HEK293T (cell line): ENCODE measurements at regions of chr19 and their contacts with region 1.

Region 1: DNA sequence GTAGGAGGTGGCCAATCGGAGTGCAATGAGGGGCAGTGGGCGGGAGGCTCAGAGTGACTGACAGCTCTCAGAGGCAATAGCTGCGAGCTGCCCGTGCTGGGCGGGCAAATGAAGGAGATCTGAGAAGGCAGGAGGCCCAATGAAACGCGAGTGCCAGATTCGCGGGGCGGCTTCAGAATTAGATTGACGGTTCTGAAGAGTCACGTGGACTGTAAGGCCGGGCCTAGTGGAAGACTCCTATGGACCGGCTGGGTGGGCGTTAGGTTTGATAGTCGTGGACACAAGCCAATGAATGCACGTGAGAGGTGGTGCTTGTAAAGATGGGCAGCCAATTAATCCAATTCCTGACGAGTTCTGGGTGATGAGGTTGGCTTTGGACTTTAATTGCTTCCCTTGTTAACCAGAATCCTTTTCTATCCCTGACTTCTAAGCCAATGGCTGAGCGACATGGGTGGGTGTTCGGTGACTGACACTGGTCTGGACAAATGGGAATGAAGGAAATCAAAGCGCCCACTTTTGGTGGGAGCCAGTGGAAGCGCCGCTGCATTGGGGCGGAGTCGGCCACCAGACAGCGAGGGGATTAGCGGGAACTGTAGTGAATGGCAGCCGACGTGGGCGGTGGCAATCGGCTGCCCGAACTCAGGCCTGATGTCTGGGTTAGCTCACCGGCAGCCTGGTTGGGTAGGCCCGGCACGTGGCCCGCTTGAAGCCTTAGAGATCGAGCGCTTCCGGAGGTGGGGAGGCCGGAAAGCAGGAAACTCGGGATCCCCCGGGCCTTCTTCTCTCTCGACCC is 524 bp upstream of the KHSRP start:
- DNase-seq: peak; percentile 95

Region 2: DNA sequence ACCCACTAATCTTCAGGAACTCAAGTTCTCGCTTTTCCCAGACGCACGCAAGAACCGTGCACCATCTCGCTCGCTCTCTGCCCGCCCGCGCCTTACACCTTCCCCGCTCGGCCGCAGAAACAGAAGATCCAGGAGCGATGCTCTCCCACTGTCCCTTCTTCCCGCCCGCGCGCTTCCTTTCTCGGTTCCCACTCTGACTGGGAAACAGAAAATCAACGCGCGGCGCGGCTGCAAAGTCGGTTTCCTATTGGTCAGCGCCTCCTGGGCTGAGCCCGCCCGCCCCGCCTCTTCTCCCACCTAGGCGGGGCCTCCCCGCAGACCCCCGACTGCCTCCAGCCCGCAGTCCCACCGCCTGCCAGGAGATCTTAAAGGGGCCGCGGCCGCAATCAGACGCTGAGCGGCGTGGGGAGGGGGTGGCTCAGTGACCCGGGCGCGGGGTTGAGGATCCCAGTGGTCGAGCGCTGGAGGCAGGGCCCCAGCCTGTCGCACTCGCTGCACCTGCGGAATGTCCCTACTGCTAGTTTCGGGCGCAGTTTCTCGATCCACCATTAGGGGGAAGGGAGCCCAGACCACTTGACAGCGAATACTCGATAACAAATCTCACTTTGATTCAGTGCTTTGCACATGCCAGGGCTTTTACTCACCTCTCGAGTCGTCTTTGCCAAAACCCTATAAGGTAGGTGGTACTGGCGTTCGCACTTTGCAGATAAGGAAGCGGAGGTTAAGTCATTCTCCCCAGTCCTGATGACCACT is 35.1 kb after region 1 on chr19:
- CTCF ChIA-PET with region 1: no interaction called
- POLR2A ChIA-PET with region 1: interaction called, 10 read pairs
- DNase-seq: peak; percentile 95